Activated CD8-positive, alpha-beta T cell treated with anti-CD3 and anti-CD28 coated beads for 36 hours (primary cell): ENCODE measurements at regions of chr12 and their contacts with region 1.

Region 1: GRCh38 chr12:55073043-55074022 is 52.9 kb upstream of the OR9K2 start:
- DNase-seq: peak; percentile 88
- ATAC-seq: peak; percentile 71
- H3K4me3 Mint-ChIP-seq: no peak overlapping the region
- H3K27ac Mint-ChIP-seq: no peak overlapping the region
- H3K4me1 Mint-ChIP-seq: peaks cover 4% of the 10 kb centered on the region
- H3K27me3 Mint-ChIP-seq: peaks cover 20% of the 10 kb centered on the region
- CTCF ChIP-seq: peak; percentile 85

Region 2: DNA sequence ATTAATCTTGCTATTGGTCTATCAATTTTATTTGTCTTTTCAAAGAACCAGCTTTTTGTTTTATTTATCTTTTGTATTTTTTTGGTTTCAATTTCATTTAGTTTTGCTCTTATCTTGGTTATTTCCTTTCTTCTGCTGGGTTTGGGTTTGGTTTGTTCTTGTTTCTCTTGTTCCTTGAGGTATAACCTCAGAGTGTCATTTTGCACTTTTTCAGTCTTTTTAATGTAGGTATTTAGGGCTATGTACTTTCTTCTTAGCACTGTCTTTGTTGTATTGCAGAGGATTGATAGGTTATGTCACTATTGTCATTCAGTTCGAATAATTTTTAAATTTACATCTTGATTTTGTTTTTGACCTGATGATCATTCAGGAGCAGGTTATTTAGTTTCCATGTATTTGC is 332.5 kb before region 1 on chr12:
- CTCF ChIA-PET with region 1: interaction called, 18 read pairs
- POLR2A ChIA-PET with region 1: no interaction called
- intact Hi-C with region 1: no loop called
- DNase-seq: no peak
- ATAC-seq: no peak
- H3K4me3 Mint-ChIP-seq: no peak overlapping the region
- H3K27ac Mint-ChIP-seq: peak overlapping the region; percentile 3
- H3K4me1 Mint-ChIP-seq: peaks cover 60% of the 10 kb centered on the region
- H3K27me3 Mint-ChIP-seq: no peaks in the 10 kb centered on the region
- CTCF ChIP-seq: no peak

Region 3: GRCh38 chr12:54859502-54859901 is 213.8 kb before region 1 on chr12:
- CTCF ChIA-PET with region 1: interaction called, 27 read pairs
- POLR2A ChIA-PET with region 1: no interaction called
- intact Hi-C with region 1: loop called (anchors 2 kb)
- DNase-seq: no peak
- ATAC-seq: no peak
- H3K4me3 Mint-ChIP-seq: no peak overlapping the region
- H3K27ac Mint-ChIP-seq: no peak overlapping the region
- H3K4me1 Mint-ChIP-seq: peaks cover 30% of the 10 kb centered on the region
- H3K27me3 Mint-ChIP-seq: peaks cover 8% of the 10 kb centered on the region
- CTCF ChIP-seq: no peak

Region 4: DNA sequence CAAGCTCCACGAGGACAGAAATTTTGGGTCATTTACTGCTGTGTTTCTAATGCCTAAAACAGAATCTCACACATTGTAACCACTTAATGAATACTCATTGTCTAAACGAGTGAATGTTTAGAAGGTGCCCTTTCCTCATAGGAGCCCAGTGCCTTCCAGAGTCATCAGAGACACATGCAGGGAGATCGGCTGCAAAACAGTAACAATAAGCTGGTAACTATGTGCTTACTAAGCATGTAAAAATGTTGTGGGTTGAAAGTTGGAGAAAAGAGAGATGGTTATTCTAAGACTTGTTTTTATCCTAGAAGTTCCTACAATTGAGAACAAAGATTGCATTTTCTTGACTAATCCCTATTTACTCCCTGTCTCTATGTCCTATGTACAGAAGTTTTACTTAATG is 96.2 kb before region 1 on chr12:
- CTCF ChIA-PET with region 1: interaction called, 51 read pairs
- POLR2A ChIA-PET with region 1: no interaction called
- intact Hi-C with region 1: no loop called
- DNase-seq: no peak
- ATAC-seq: no peak
- H3K4me3 Mint-ChIP-seq: peak overlapping the region; percentile 85
- H3K27ac Mint-ChIP-seq: peak overlapping the region; percentile 94
- H3K4me1 Mint-ChIP-seq: peaks cover 83% of the 10 kb centered on the region
- H3K27me3 Mint-ChIP-seq: no peaks in the 10 kb centered on the region
- CTCF ChIP-seq: no peak

Region 5: GRCh38 chr12:55024565-55024964 is 48.8 kb before region 1 on chr12:
- CTCF ChIA-PET with region 1: interaction called, 14 read pairs
- POLR2A ChIA-PET with region 1: no interaction called
- intact Hi-C with region 1: no loop called
- DNase-seq: no peak
- ATAC-seq: no peak
- H3K4me3 Mint-ChIP-seq: no peak overlapping the region
- H3K27ac Mint-ChIP-seq: no peak overlapping the region
- H3K4me1 Mint-ChIP-seq: peaks cover 6% of the 10 kb centered on the region
- H3K27me3 Mint-ChIP-seq: peaks cover 13% of the 10 kb centered on the region
- CTCF ChIP-seq: no peak

Region 6: DNA sequence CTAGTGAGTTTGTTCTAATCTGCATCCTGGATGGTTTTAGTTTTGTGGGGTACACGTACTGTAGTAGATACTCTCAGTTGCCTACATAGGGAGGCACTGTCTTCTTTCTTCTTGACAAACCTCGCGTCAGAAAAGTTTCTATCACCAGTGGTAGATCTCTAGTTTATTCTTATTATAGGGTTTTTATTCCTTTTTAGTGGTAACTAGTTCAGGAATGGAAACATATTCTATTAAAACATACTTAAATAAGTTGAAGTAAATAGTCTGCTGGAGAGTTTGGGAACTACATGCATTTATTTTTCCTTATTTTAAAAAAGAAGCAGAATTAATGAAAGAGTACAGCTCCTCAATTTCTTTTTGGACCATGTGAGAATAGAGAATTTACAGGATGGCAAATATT is 19.2 kb after region 1 on chr12:
- CTCF ChIA-PET with region 1: interaction called, 11 read pairs
- POLR2A ChIA-PET with region 1: no interaction called
- intact Hi-C with region 1: no loop called
- DNase-seq: no peak
- ATAC-seq: no peak
- H3K4me3 Mint-ChIP-seq: no peak overlapping the region
- H3K27ac Mint-ChIP-seq: no peak overlapping the region
- H3K4me1 Mint-ChIP-seq: no peaks in the 10 kb centered on the region
- H3K27me3 Mint-ChIP-seq: peaks cover 11% of the 10 kb centered on the region
- CTCF ChIP-seq: no peak